ENCODE measurements at regions of chr9 and their contacts with region 1.

Region 1: DNA sequence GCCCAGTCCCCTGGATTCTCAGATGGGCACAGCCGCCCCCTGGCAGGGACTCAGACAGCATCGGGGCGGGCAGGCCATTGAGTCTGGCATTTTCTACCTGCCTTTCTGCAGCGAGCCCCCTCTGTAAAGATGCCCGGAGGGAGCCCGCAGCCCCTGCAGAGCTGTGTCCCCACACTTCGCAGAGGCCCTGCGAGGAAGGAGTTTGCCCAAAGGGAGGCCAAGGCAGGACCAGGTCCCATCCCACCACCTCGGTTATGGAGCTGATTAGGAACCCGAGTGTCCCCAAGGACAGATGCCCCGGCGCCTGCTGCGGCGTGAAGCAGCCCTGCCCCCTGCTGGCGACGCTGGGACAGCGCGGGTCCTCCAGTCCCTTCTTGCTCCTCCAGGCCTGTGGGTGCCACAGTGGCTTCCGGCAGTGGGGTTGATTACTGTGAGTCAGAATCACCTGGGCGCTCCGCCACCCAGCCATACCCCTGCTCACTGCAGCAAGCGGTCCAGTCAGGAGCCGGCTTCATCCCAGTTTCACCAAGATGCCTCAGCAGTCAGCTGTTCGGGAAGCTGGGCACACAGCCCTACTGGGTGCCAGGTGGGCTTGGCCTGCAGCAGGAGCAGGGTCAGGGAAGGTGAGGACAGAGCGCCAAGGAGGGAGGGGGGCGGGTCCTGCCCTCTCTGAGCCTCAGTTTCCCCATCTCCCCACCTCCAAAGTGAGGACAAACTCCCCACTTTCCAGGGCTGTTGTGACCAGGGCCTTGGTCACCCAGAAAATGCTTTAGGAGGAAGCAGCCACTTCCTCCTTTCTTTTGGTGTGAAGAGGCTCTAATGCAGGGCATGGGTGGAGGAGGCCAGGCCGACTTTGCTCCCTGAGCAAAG is 117.1 kb downstream of the RXRA start:
- DNase-seq: peak; percentile 92 to 98
- ATAC-seq: peak; percentile 91
- H3K4me3 ChIP-seq: no peak overlapping the region
- H3K27ac ChIP-seq: peak overlapping the region; percentile 72 to 82
- H3K4me1 ChIP-seq: peaks cover 13% of the 10 kb centered on the region
- CTCF ChIP-seq: peak; percentile 96
- EP300 ChIP-seq: no peak
- POLR2A ChIP-seq: no peak
- RAD21 ChIP-seq: peak; percentile 98 to 100

Region 2: GRCh38 chr9:134163353-134164196 is 279.8 kb before region 1 on chr9:
- CTCF ChIA-PET with region 1: interaction called, 178 read pairs
- POLR2A ChIA-PET with region 1: interaction called, 4 read pairs
- DNase-seq: no peak
- ATAC-seq: no peak
- H3K4me3 ChIP-seq: no peak overlapping the region; the same call in 2 of the 3 replicates
- H3K27ac ChIP-seq: no peak overlapping the region
- H3K4me1 ChIP-seq: peaks cover 13% of the 10 kb centered on the region; the same call in 2 of the 3 replicates
- CTCF ChIP-seq: no peak
- EP300 ChIP-seq: no peak
- POLR2A ChIP-seq: no peak
- RAD21 ChIP-seq: no peak

Region 3: GRCh38 chr9:134185536-134186011 is 257.8 kb before region 1 on chr9:
- CTCF ChIA-PET with region 1: interaction called, 21 read pairs
- POLR2A ChIA-PET with region 1: no interaction called
- DNase-seq: no peak
- ATAC-seq: no peak
- H3K4me3 ChIP-seq: no peak overlapping the region
- H3K27ac ChIP-seq: no peak overlapping the region
- H3K4me1 ChIP-seq: no peaks in the 10 kb centered on the region
- CTCF ChIP-seq: no peak
- EP300 ChIP-seq: no peak
- POLR2A ChIP-seq: no peak
- RAD21 ChIP-seq: no peak

Region 4: GRCh38 chr9:134333234-134333873 is 110.0 kb before region 1 on chr9:
- CTCF ChIA-PET with region 1: interaction called, 21 read pairs
- POLR2A ChIA-PET with region 1: no interaction called
- DNase-seq: no peak
- ATAC-seq: no peak
- H3K4me3 ChIP-seq: no peak overlapping the region
- H3K27ac ChIP-seq: peak overlapping the region in 1 of 2 experiments; percentile 4; a peak in 2 of 6 replicates
- H3K4me1 ChIP-seq: peaks cover 39% of the 10 kb centered on the region
- CTCF ChIP-seq: no peak
- EP300 ChIP-seq: no peak
- POLR2A ChIP-seq: no peak
- RAD21 ChIP-seq: no peak

Region 5: GRCh38 chr9:134407123-134407808 is 36.1 kb before region 1 on chr9:
- CTCF ChIA-PET with region 1: interaction called, 20 read pairs
- POLR2A ChIA-PET with region 1: no interaction called
- DNase-seq: peak; percentile 96 to 98
- ATAC-seq: peak; percentile 76 to 87
- H3K4me3 ChIP-seq: peak overlapping the region; percentile 33
- H3K27ac ChIP-seq: peak overlapping the region; percentile 99 to 100
- H3K4me1 ChIP-seq: peaks cover 86% of the 10 kb centered on the region
- CTCF ChIP-seq: no peak
- EP300 ChIP-seq: peak in 1 of 2 experiments; percentile 60; a peak in 3 of 5 replicates
- POLR2A ChIP-seq: peak; percentile 70
- RAD21 ChIP-seq: peak in 1 of 2 experiments; percentile 14; a peak in 2 of 5 replicates

Region 6: GRCh38 chr9:134455934-134456739 is 12.7 kb after region 1 on chr9:
- CTCF ChIA-PET with region 1: interaction called, 76 read pairs
- POLR2A ChIA-PET with region 1: no interaction called
- DNase-seq: peak; percentile 59 to 64
- ATAC-seq: peak; percentile 57 to 69
- H3K4me3 ChIP-seq: no peak overlapping the region
- H3K27ac ChIP-seq: peak overlapping the region; percentile 80 to 92
- H3K4me1 ChIP-seq: peaks cover 54% of the 10 kb centered on the region
- CTCF ChIP-seq: no peak
- EP300 ChIP-seq: peak in 1 of 2 experiments; percentile 28; a peak in 1 of 5 replicates
- POLR2A ChIP-seq: no peak
- RAD21 ChIP-seq: peak in 1 of 2 experiments; percentile 29; a peak in 1 of 5 replicates

Region 7: DNA sequence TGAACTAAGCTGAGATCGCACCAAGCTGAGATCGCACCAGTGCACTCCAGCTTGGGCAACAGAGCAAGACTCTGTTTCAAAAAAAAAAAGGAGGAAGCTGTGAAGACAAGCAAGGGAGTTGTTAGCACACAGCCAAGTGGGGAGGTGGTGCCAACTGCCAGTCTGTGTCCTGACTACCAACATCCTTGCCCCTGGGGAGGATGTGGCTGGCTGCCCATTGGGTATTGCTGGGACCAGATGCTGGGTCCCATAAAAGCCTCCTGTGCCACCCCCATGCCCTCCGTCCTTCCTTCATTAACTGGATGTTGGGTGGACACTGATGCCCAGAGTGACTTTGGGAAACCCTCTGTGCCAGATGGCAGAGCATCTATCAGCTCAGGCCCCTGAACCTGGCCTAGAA is 41.1 kb after region 1 on chr9:
- CTCF ChIA-PET with region 1: no interaction called
- POLR2A ChIA-PET with region 1: no interaction called
- DNase-seq: no peak
- ATAC-seq: no peak
- H3K4me3 ChIP-seq: no peak overlapping the region
- H3K27ac ChIP-seq: no peak overlapping the region
- H3K4me1 ChIP-seq: no peaks in the 10 kb centered on the region
- CTCF ChIP-seq: no peak
- EP300 ChIP-seq: no peak
- POLR2A ChIP-seq: no peak
- RAD21 ChIP-seq: no peak

Region 8: GRCh38 chr9:134559013-134559412 is 115.6 kb after region 1 on chr9:
- CTCF ChIA-PET with region 1: no interaction called
- POLR2A ChIA-PET with region 1: no interaction called
- DNase-seq: no peak
- ATAC-seq: no peak
- H3K4me3 ChIP-seq: no peak overlapping the region
- H3K27ac ChIP-seq: no peak overlapping the region
- H3K4me1 ChIP-seq: peaks cover 3% of the 10 kb centered on the region; the same call in 1 of the 3 replicates
- CTCF ChIP-seq: no peak
- EP300 ChIP-seq: no peak
- POLR2A ChIP-seq: no peak
- RAD21 ChIP-seq: no peak